Sciatic nerve (tissue), 2 donors: ENCODE measurements at regions of chr6 and their contacts with region 1.

Region 1: GRCh38 chr6:108348655-108349349 is 53.9 kb downstream of the AFG1L start:
- DNase-seq: no peak
- ATAC-seq: no peak

Region 2: DNA sequence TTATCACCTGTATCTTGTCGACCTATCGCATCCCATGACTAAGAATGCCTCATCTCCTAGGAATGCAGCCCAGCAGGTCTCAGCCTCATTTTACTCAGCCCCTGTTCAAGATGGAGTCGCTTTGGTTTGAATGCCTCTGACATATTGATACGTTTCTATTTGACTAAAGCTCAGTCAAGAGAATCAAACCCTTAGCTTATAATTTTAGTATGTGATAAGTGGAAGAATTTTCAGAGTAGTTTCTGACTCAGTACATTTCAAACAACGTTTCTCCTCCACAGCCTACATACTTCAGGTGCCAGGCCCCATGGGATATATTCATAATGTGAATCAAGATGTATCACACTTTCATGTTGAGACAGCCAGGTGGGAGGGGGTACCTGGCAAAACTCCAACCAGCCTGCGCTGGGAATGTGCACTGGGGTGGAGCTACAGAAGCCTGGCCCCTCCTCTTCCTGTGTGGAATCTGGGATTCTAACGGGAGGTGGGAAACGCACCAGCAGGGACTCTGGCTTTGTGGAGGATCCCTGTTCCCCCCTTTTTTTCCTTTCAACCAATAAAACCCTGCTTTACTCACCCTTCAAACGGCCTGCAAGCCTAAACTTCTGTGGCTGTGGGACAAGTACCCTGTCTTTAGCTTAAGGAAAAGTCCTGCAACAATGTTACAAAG is 384.0 kb before region 1 on chr6:
- intact Hi-C with region 1: no loop called
- DNase-seq: no peak
- ATAC-seq: no peak

Region 3: DNA sequence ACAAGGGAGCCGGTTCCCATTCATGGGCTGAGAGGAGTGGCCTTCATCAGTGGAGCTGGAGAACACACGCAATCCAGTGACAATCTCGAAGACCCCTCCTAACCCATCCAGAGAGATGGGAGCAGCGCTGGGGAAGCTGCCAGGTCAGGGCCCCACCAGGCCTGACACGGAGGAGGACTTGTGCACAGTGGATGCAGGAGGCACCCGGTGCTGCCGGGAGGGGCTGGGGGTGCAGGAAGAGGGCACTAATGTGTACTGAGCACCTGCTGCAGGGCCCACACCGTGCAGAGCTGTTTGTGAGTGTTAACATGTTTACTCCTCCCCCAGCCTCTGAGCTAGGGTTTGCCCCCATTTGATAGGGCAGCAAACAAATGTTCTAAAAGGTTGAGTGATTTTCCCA is 1585.5 kb after region 1 on chr6:
- intact Hi-C with region 1: loop called (anchors 5 kb)
- DNase-seq: no peak
- ATAC-seq: no peak